ENCODE measurements at regions of chr19 and their contacts with region 1.

Region 1: GRCh38 chr19:4638828-4639530 is at the start of gene TNFAIP8L1:
- DNase-seq: peak; percentile 99
- H3K4me3 Mint-ChIP-seq: peak within 1 kb of the TSS; percentile 98
- H3K27ac Mint-ChIP-seq: peak within 1 kb of the TSS; percentile 94
- H3K4me1 Mint-ChIP-seq: peaks cover 32% of the 10 kb centered on the region
- H3K27me3 Mint-ChIP-seq: no peaks in the 10 kb centered on the region
- total RNA-seq, gene TNFAIP8L1: 13.2 and 13.7 TPM in 2 replicates

Region 2: GRCh38 chr19:3626473-3627350 is 1012.3 kb before region 1 on chr19 and contains the start of gene CACTIN:
- intact Hi-C with region 1: loop called (anchors 2 kb)
- DNase-seq: peak; percentile 98
- H3K4me3 Mint-ChIP-seq: peak within 1 kb of the TSS; percentile 89
- H3K27ac Mint-ChIP-seq: peak within 1 kb of the TSS; percentile 97
- H3K4me1 Mint-ChIP-seq: peaks cover 13% of the 10 kb centered on the region
- H3K27me3 Mint-ChIP-seq: no peaks in the 10 kb centered on the region
- total RNA-seq, gene CACTIN: 37.2 and 40.8 TPM in 2 replicates

Region 3: DNA sequence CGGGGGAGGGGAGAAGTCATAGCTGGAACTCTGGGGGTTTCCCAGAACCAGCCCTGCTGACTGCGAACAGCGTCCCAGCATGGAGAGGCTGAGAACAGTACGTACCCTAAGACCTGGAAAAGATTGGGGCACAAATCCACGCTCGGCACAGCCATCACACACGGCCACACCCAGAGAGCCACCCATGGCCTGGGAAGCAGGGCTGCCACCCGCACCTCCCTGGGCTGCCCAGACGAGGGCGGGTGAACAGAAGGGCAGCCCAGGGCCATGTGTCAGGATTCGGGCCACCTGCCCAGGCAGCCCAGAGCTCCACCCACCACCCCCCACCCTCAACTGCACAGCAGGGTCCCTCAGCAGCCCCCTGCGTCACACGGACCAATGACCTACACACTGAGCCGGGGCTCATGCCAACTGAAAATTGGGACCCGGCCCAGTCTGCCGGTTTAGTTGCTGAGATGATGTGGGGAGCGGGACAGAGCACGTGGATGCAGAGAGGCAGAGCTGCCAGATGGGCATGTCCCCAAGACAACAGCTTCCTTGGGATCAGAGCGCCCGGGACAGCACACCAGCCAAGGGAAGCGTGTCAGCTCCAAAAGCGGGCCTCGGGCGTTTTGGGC is 189.8 kb before region 1 on chr19:
- intact Hi-C with region 1: no loop called
- DNase-seq: no peak
- H3K4me3 Mint-ChIP-seq: no peak overlapping the region
- H3K27ac Mint-ChIP-seq: no peak overlapping the region
- H3K4me1 Mint-ChIP-seq: no peaks in the 10 kb centered on the region
- H3K27me3 Mint-ChIP-seq: no peaks in the 10 kb centered on the region

Region 4: GRCh38 chr19:4495471-4495870 is 143.5 kb before region 1 on chr19:
- intact Hi-C with region 1: no loop called
- DNase-seq: no peak
- H3K4me3 Mint-ChIP-seq: no peak overlapping the region
- H3K27ac Mint-ChIP-seq: no peak overlapping the region
- H3K4me1 Mint-ChIP-seq: no peaks in the 10 kb centered on the region
- H3K27me3 Mint-ChIP-seq: no peaks in the 10 kb centered on the region

Region 5: GRCh38 chr19:4524808-4525562 is 114.0 kb before region 1 on chr19:
- intact Hi-C with region 1: loop called (anchors 1 kb)
- DNase-seq: peak; percentile 42
- H3K4me3 Mint-ChIP-seq: no peak overlapping the region
- H3K27ac Mint-ChIP-seq: no peak overlapping the region
- H3K4me1 Mint-ChIP-seq: no peaks in the 10 kb centered on the region
- H3K27me3 Mint-ChIP-seq: peaks cover 6% of the 10 kb centered on the region

Region 6: DNA sequence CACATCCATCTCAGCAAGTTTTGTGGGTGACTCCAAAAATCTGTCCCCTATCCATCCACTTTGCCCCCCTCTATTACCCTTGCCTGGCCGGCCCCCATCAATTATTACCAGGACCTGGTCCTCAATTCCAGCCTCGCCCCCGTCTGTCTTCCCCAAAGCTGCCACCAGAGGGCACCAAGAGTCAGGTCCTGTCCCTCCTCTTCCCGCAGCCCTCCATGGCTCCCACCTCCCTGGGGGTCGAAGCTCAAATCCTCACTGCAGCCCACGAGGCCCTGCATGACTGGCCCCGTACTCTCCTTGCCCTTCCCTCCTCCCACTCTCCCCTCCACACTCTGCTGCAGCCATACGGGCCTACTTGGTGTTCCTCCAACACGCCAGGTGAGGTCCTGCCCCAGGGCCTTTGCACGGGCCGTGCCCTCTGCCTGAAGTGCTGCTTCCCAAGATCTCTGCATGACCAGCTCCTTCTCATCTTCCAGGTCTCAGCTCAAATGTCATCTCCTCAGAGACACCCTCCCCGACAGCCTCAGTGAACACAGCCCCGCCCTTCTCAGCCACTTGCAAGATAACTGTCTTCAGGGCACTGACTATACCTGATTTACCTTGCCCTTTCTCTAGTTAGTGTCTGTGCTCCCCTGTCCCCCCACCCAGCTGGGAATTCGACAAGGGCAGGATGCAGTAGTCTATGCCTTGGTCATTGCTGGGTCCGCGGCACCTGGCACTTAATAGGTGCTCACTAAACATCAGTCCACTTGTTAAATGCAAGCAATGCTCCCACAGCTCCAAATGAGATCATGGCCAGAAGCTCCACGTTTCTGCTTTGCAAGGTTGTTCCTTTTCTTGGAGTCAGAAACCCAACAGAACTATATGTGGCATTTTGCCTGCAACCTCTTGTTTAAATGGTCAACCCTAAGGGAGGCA is 62.7 kb before region 1 on chr19:
- intact Hi-C with region 1: loop called (anchors 1 kb)
- DNase-seq: peak; percentile 54
- H3K4me3 Mint-ChIP-seq: no peak overlapping the region
- H3K27ac Mint-ChIP-seq: no peak overlapping the region
- H3K4me1 Mint-ChIP-seq: no peaks in the 10 kb centered on the region
- H3K27me3 Mint-ChIP-seq: peaks cover 33% of the 10 kb centered on the region

Region 7: DNA sequence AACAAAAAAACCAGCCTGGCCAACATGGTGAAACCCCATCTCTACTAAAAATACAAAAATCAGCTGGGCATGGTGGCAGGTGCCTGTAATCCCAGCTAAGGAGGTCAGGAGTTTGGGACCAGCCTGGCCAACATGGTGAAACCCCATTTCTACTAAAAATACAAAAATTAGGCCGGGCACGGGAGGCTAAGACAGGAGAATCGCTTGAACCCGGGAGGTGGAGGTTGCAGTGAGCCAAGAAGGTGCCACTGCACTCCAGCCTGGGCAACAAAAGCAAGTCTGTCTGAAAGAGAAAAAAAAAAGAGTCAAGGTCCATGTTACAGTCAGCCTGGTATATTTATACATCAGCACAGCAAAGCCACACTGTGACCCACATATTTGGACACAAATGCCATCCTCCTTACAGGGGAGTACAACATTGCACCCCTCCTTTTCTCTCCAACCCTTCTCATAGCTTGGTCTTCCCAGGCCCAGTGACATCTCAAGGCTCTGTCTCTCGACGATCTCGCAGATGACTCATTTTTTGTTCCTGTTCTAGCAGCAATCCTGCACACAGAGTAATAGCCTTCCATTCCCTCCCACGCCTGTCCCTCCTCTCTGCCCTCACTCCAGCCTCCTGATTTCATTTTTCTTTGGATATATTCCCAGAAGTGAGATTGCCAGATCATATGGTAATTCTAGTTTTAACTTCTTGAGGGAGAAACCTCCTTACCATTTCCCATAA is 105.6 kb after region 1 on chr19:
- intact Hi-C with region 1: no loop called
- DNase-seq: no peak
- H3K4me3 Mint-ChIP-seq: no peak overlapping the region
- H3K27ac Mint-ChIP-seq: no peak overlapping the region
- H3K4me1 Mint-ChIP-seq: no peaks in the 10 kb centered on the region
- H3K27me3 Mint-ChIP-seq: peaks cover 20% of the 10 kb centered on the region

Region 8: DNA sequence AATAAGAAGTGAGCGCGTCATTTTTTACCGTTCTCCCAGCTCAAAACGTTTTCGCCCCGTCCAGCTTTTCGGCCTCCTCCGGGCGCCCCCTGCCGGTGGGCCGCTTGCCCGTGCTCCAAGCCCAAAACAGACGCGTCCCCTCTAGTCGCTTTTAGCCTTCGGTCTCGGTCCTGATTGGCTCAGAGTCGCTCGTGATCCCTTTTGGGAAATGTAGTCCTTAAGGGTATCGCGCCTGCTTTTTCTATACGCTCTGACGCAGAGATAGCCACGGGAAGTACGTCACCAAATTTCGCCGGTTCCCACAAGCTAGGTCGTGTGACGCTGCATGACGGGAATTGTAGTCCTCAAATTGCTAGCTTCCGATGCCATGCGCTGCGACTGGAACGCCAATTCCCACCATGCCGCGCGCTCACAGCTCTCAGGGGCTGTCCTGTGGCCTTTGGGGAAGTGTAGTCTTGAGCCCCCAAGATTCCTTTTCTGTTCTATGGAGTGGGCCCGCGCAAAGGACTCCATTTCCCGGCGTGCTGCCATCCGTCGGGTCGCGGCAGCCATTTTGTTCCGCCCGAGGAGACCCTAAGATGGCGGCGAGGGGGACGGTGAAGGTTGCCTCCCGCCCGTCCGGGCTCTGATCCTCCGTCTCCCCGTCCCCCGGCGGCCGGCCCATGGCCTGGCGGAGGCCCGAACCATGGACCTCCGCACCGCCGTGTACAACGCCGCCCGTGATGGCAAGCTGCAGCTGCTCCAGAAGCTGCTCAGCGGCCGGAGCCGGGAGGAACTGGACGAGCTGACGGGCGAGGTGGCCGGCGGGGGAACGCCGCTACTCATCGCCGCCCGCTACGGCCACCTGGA is 152.4 kb after region 1 on chr19 and contains the start of gene FEM1A:
- intact Hi-C with region 1: loop called (anchors 1 kb)
- DNase-seq: peak; percentile 98
- H3K4me3 Mint-ChIP-seq: peak within 1 kb of the TSS; percentile 89
- H3K27ac Mint-ChIP-seq: peak within 1 kb of the TSS; percentile 88
- H3K4me1 Mint-ChIP-seq: peaks cover 9% of the 10 kb centered on the region
- H3K27me3 Mint-ChIP-seq: no peaks in the 10 kb centered on the region
- total RNA-seq, gene FEM1A: 23.8 and 24.8 TPM in 2 replicates

Region 9: GRCh38 chr19:4803736-4804695 is 165.0 kb after region 1 on chr19:
- intact Hi-C with region 1: no loop called
- DNase-seq: peak; percentile 33
- H3K4me3 Mint-ChIP-seq: no peak overlapping the region
- H3K27ac Mint-ChIP-seq: no peak overlapping the region
- H3K4me1 Mint-ChIP-seq: no peaks in the 10 kb centered on the region
- H3K27me3 Mint-ChIP-seq: no peaks in the 10 kb centered on the region

Measured in activated T-helper 1 cell treated with anti-CD3 and anti-CD28 coated beads, Interleukin-12 subunit alpha, Interleukin-12 subunit beta, Interleukin-2, Interleukin-4 antibody, amounts not matched to agents 30 ng/mL and 10 ng/mL and 1 ng/mL, durations not matched to agents 14 hours and 24 hours and 36 hours (primary cell).